MCF 10A (cell line): ENCODE measurements at regions of chr16 and their contacts with region 1.

Region 1: GRCh38 chr16:10314811-10315210 is 71.0 kb upstream of the ATF7IP2 start:
- DNase-seq: peak; percentile 25
- H3K4me3 Mint-ChIP-seq: no peak overlapping the region
- H3K27ac Mint-ChIP-seq: no peak overlapping the region
- H3K4me1 Mint-ChIP-seq: no peaks in the 10 kb centered on the region
- H3K27me3 Mint-ChIP-seq: no peaks in the 10 kb centered on the region
- CTCF ChIP-seq: peak; percentile 35

Region 2: DNA sequence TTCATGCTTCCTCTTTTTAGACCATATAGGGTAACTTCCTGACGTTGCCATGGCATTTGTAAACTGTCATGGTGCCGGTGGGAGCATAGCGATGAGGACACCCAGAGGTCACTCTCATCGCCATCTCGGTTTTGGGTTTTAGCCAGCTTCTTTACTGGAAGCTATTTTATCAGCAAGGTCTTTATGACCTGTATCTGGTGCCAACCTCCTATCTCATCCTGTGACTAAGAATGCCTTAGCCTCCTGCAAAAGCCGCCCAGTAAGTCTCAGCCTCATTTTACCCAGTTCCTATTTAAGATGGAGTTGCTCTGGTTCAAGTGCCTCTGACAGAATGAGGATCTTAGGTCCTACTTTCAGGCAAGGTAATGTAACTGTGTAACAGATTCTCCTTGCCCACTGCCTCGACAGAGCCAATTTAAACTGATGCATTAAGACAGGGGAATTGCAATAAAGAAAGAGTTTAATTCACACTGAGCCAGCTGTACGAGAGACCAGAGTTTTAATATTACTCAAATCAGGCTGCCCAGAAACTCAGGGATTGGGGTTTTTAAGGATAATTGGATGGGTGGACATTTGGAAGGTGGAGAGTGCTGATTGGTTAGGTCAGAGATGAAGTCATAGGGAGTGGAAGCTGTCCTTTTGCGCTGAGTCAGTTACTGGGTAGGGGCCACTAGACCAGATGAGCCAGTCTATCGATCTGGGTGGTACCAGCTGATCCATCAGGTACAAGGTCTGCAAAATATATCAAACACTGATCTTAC is 11.2 kb after region 1 on chr16:
- CTCF ChIA-PET with region 1: interaction called, 21 read pairs
- POLR2A ChIA-PET with region 1: interaction called, 3 read pairs
- intact Hi-C with region 1: no loop called
- DNase-seq: no peak
- H3K4me3 Mint-ChIP-seq: no peak overlapping the region
- H3K27ac Mint-ChIP-seq: no peak overlapping the region
- H3K4me1 Mint-ChIP-seq: peaks cover 4% of the 10 kb centered on the region
- H3K27me3 Mint-ChIP-seq: no peaks in the 10 kb centered on the region
- CTCF ChIP-seq: no peak

Region 3: GRCh38 chr16:10356870-10357842 is 42.3 kb after region 1 on chr16:
- CTCF ChIA-PET with region 1: no interaction called
- POLR2A ChIA-PET with region 1: no interaction called
- intact Hi-C with region 1: no loop called
- DNase-seq: no peak
- H3K4me3 Mint-ChIP-seq: no peak overlapping the region
- H3K27ac Mint-ChIP-seq: no peak overlapping the region
- H3K4me1 Mint-ChIP-seq: no peaks in the 10 kb centered on the region
- H3K27me3 Mint-ChIP-seq: no peaks in the 10 kb centered on the region
- CTCF ChIP-seq: no peak

Region 4: DNA sequence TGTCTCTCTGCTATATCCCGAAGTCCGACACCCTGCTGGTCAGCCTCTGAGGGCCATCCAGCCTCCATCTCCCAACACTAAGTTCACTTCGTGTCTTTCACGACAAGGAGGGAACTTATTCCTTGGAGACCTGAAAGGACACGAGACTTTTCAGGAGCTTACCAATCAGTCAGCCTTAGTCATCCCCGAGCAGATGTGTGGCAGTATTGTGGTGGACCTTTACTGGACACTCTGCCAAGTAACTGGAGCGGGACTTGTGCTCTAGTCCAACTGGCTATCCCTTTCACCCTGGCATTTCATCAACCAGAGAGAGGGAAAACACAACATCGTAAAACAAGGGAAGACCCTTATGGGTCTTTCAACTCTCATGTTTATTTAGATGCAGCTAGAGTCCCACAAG is 178.5 kb after region 1 on chr16:
- CTCF ChIA-PET with region 1: interaction called, 17 read pairs
- POLR2A ChIA-PET with region 1: no interaction called
- intact Hi-C with region 1: no loop called
- DNase-seq: no peak
- H3K4me3 Mint-ChIP-seq: no peak overlapping the region
- H3K27ac Mint-ChIP-seq: no peak overlapping the region
- H3K4me1 Mint-ChIP-seq: no peaks in the 10 kb centered on the region
- H3K27me3 Mint-ChIP-seq: no peaks in the 10 kb centered on the region
- CTCF ChIP-seq: no peak

Region 5: GRCh38 chr16:10731790-10732189 is 417.0 kb after region 1 on chr16:
- CTCF ChIA-PET with region 1: interaction called, 10 read pairs
- POLR2A ChIA-PET with region 1: no interaction called
- intact Hi-C with region 1: loop called (anchors 5 kb)
- DNase-seq: no peak
- H3K4me3 Mint-ChIP-seq: no peak overlapping the region
- H3K27ac Mint-ChIP-seq: no peak overlapping the region
- H3K4me1 Mint-ChIP-seq: no peaks in the 10 kb centered on the region
- H3K27me3 Mint-ChIP-seq: no peaks in the 10 kb centered on the region
- CTCF ChIP-seq: no peak